Mammary epithelial cell (primary cell): ENCODE measurements at regions of chr7 and their contacts with region 1.

Region 1: GRCh38 chr7:4689668-4690067 is 7.6 kb downstream of the FOXK1 start:
- DNase-seq: no peak
- H3K4me3 ChIP-seq: no peak overlapping the region
- H3K27ac ChIP-seq: no peak overlapping the region
- H3K4me1 ChIP-seq: peaks cover 9% of the 10 kb centered on the region
- H3K27me3 ChIP-seq: no peaks in the 10 kb centered on the region
- CTCF ChIP-seq: no peak

Region 2: GRCh38 chr7:4744391-4745264 is 55.0 kb after region 1 on chr7:
- CTCF ChIA-PET with region 1: no interaction called
- dilution Hi-C with region 1: loop called (anchors 5 kb)
- in situ Hi-C with region 1: loop called in 1 of 2 experiments (anchors 10 kb)
- intact Hi-C with region 1: loop called (anchors 1 kb)
- DNase-seq: peak; percentile 99
- H3K4me3 ChIP-seq: peak overlapping the region in 2 of 3 experiments; percentile 16
- H3K27ac ChIP-seq: peak overlapping the region; percentile 91
- H3K4me1 ChIP-seq: peaks cover 25% of the 10 kb centered on the region
- H3K27me3 ChIP-seq: no peaks in the 10 kb centered on the region
- CTCF ChIP-seq: peak in 1 of 2 donors; percentile 1